IMR-90 (cell line): ENCODE measurements at regions of chr13 and their contacts with region 1.

Region 1: DNA sequence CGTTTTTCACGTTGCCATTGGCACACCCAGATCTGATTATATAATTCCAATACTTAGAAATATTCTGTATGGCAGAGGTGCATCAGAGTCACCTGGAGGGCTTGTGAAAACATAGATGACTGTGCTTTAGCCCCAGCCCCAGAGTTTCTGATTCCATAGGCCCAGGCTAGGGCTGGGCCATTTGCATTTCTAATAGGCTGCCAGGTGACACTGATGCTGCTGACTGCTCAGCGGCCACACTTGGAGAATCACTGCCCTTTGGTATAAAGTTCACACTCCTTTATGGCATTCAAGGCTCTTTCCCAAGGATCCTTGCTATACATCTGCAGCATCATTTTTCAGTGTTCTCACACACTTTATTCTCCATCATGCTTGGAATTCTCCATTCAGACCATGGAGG is 137.1 kb downstream of the AKAP11 start:
- DNase-seq: no peak
- ATAC-seq: no peak
- H3K4me3 ChIP-seq: no peak overlapping the region
- H3K27ac ChIP-seq: no peak overlapping the region
- H3K4me1 ChIP-seq: no peaks in the 10 kb centered on the region
- H3K27me3 ChIP-seq: peaks cover 8% of the 10 kb centered on the region
- CTCF ChIP-seq: no peak
- POLR2A ChIP-seq: no peak
- RAD21 ChIP-seq: no peak

Region 2: DNA sequence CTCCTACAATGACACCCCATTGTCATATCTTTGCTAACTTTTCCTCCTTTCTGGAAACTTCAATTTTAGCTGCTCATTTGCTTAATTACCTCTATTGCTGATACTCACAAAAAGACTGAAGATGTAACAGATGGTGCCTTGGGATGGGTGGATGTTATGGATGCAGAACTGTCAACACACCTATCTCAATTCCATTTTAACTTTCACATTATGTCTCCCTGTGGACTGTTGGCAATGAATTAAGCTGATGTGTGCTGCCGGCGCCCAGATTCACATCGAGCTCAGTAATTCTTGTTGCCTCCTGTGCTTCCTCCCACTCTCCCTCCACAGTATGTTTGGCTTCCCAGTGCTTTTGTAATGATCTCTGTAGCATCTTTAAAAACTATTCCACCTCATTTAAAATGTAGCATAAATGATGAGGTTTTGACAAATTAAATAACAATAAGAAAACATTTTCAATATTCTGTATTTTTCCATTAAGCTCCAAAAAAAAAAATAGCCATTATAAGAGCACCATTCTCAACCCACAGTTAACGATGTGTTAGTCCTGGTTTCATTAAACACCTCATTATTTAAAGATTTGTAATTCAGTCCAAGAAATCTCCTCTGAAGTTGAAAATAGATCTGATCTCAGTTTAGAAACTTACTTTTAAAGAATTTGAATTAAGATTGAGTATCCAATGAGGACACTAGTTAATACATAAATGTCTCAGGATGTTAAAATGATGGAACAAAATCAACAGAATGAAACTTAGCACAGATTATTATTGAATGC is 272.4 kb after region 1 on chr13:
- CTCF ChIA-PET with region 1: no interaction called
- POLR2A ChIA-PET with region 1: interaction called, 11 read pairs
- dilution Hi-C with region 1: no loop called
- in situ Hi-C with region 1: no loop called
- intact Hi-C with region 1: no loop called
- DNase-seq: no peak
- ATAC-seq: no peak
- H3K4me3 ChIP-seq: no peak overlapping the region
- H3K27ac ChIP-seq: no peak overlapping the region
- H3K4me1 ChIP-seq: no peaks in the 10 kb centered on the region
- H3K27me3 ChIP-seq: peaks cover 14% of the 10 kb centered on the region
- CTCF ChIP-seq: no peak
- POLR2A ChIP-seq: no peak
- RAD21 ChIP-seq: no peak

Region 3: GRCh38 chr13:44293908-44294735 is 1885.0 kb after region 1 on chr13:
- CTCF ChIA-PET with region 1: no interaction called
- POLR2A ChIA-PET with region 1: no interaction called
- dilution Hi-C with region 1: no loop called
- in situ Hi-C with region 1: no loop called
- intact Hi-C with region 1: no loop called
- DNase-seq: peak; percentile 72
- ATAC-seq: peak; percentile 89
- H3K4me3 ChIP-seq: no peak overlapping the region
- H3K27ac ChIP-seq: peak overlapping the region; percentile 75; the same call in 1 of the 2 replicates
- H3K4me1 ChIP-seq: peaks cover 10% of the 10 kb centered on the region
- H3K27me3 ChIP-seq: peaks cover 2% of the 10 kb centered on the region; the same call in 1 of the 2 replicates
- CTCF ChIP-seq: no peak
- POLR2A ChIP-seq: no peak
- RAD21 ChIP-seq: no peak